ENCODE measurements at regions of chr6 and their contacts with region 1.

Region 1: DNA sequence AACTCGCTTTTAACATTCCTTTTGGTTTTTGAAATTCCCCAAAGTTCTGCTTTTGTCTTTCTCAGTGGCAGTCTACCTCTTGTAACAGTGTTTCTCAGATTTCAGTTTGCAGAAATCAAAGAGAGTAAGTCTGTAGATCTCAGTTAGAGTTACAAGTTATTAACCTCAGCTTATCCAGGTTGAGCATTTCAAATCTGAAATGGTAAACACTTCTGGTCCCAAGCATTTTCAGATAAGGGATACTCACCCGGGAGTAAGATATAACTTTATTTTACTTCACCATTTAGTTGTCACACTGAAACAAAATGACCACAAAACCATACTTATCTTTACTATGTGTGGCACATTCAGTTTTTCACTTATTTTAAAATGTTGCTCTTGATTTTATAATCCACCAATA is 9.8 kb downstream of the ZNF292 start:
- DNase-seq: no peak
- H3K4me3 ChIP-seq: no peak overlapping the region
- H3K27ac ChIP-seq: no peak overlapping the region
- H3K4me1 ChIP-seq: peaks cover 0 to 63% (median 28%) of the 10 kb centered on the region in 4 donors
- H3K27me3 ChIP-seq: no peaks in the 10 kb centered on the region
- CTCF ChIP-seq: no peak
- EP300 ChIP-seq: no peak
- POLR2A ChIP-seq: no peak

Region 2: GRCh38 chr6:87200469-87201174 is 35.4 kb after region 1 on chr6:
- intact Hi-C with region 1: loop called (anchors 5 kb)
- DNase-seq: peak; percentile 72
- H3K4me3 ChIP-seq: no peak overlapping the region
- H3K27ac ChIP-seq: no peak overlapping the region
- H3K4me1 ChIP-seq: peaks cover 0 to 22% (median 12%) of the 10 kb centered on the region in 4 donors
- H3K27me3 ChIP-seq: no peaks in the 10 kb centered on the region
- CTCF ChIP-seq: no peak
- EP300 ChIP-seq: no peak
- POLR2A ChIP-seq: no peak